ENCODE measurements at regions of chr2 and their contacts with region 1.

Region 1: GRCh38 chr2:96208143-96209010 is at the start of gene STARD7:
- DNase-seq: peak; percentile 99
- ATAC-seq: peak; percentile 93
- H3K4me3 Mint-ChIP-seq: peak within 1 kb of the TSS; percentile 89
- H3K27ac Mint-ChIP-seq: peak within 1 kb of the TSS; percentile 91
- H3K4me1 Mint-ChIP-seq: peaks cover 45% of the 10 kb centered on the region
- H3K27me3 Mint-ChIP-seq: no peaks in the 10 kb centered on the region
- CTCF ChIP-seq: no peak
- total RNA-seq, gene STARD7: 145 to 149 TPM

Region 2: DNA sequence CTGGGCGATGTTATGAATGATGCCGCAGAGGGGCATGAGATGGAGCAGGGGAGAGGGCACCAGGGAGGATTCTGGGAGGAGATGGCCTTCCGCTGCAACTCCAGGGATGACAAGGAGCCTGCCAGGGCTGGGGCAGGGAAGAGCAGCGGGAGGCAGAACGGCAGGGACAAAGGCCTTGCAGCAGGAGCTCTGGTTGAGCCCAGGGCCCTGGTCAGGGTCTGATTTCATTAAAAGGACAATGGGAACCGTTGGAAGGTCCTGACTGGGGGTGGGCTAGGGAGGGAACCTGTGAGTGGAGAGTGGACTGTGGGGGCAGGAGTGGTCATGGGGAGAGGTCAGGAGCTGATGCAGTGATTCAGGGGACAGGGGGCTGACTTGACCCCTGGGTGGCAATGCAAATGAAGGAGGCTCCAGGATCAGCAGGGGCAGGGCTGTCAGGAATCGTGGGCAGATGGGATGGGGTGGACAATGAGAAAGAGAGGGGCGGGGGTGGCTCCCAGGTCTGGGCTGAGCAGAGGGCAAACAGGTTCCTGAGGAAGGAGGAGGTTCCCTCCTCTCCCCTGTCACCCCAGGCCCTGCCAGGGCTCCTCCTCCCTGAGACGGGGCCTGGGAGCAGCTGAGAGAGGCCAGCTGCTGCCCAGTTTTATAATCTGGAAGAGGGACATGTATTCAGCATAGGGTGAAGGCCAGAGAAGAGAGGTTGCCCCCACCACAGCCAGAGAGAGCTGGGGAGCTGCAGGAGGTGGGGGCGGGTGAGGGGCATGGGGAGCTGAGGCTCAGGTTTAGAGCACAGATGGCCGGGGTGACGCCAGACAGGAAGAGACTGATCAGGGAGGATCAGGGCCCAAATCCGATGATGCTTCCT is 55.8 kb before region 1 on chr2:
- CTCF ChIA-PET with region 1: no interaction called
- POLR2A ChIA-PET with region 1: interaction called, 11 read pairs
- intact Hi-C with region 1: no loop called
- DNase-seq: no peak
- ATAC-seq: no peak
- H3K4me3 Mint-ChIP-seq: no peak overlapping the region
- H3K27ac Mint-ChIP-seq: peak overlapping the region; percentile 48
- H3K4me1 Mint-ChIP-seq: peaks cover 94% of the 10 kb centered on the region
- H3K27me3 Mint-ChIP-seq: no peaks in the 10 kb centered on the region
- CTCF ChIP-seq: no peak

Region 3: GRCh38 chr2:96260404-96261260 is 52.3 kb after region 1 on chr2:
- CTCF ChIA-PET with region 1: interaction called, 12 read pairs
- POLR2A ChIA-PET with region 1: interaction called, 8 read pairs
- intact Hi-C with region 1: loop called (anchors 2 kb)
- DNase-seq: peak; percentile 61
- ATAC-seq: peak; percentile 66
- H3K4me3 Mint-ChIP-seq: no peak overlapping the region
- H3K27ac Mint-ChIP-seq: peak overlapping the region; percentile 81
- H3K4me1 Mint-ChIP-seq: peaks cover 69% of the 10 kb centered on the region
- H3K27me3 Mint-ChIP-seq: no peaks in the 10 kb centered on the region
- CTCF ChIP-seq: no peak

Region 4: GRCh38 chr2:96265840-96266679 is 57.7 kb after region 1 on chr2 and contains the starts of genes CIAO1 and TMEM127:
- CTCF ChIA-PET with region 1: interaction called, 12 read pairs
- POLR2A ChIA-PET with region 1: interaction called, 12 read pairs
- intact Hi-C with region 1: loop called (anchors 2 kb)
- DNase-seq: peak; percentile 99
- ATAC-seq: peak; percentile 95
- H3K4me3 Mint-ChIP-seq: peak within 1 kb of the TSS; percentile 85
- H3K27ac Mint-ChIP-seq: peak within 1 kb of the TSS; percentile 94
- H3K4me1 Mint-ChIP-seq: peaks cover 45% of the 10 kb centered on the region
- H3K27me3 Mint-ChIP-seq: no peaks in the 10 kb centered on the region
- CTCF ChIP-seq: peak; percentile 18
- total RNA-seq, gene CIAO1: 72.1 to 72.3 TPM
- total RNA-seq, gene TMEM127: 13.1 to 15.0 TPM

Region 5: GRCh38 chr2:96574364-96574763 is 366.0 kb after region 1 on chr2:
- CTCF ChIA-PET with region 1: no interaction called
- POLR2A ChIA-PET with region 1: no interaction called
- intact Hi-C with region 1: no loop called
- DNase-seq: no peak
- ATAC-seq: no peak
- H3K4me3 Mint-ChIP-seq: no peak overlapping the region
- H3K27ac Mint-ChIP-seq: no peak overlapping the region
- H3K4me1 Mint-ChIP-seq: no peaks in the 10 kb centered on the region
- H3K27me3 Mint-ChIP-seq: no peaks in the 10 kb centered on the region
- CTCF ChIP-seq: no peak

Measured in activated CD8-positive, alpha-beta T cell treated with anti-CD3 and anti-CD28 coated beads for 36 hours (primary cell).